ENCODE measurements at regions of chr4 and their contacts with region 1.

Region 1: DNA sequence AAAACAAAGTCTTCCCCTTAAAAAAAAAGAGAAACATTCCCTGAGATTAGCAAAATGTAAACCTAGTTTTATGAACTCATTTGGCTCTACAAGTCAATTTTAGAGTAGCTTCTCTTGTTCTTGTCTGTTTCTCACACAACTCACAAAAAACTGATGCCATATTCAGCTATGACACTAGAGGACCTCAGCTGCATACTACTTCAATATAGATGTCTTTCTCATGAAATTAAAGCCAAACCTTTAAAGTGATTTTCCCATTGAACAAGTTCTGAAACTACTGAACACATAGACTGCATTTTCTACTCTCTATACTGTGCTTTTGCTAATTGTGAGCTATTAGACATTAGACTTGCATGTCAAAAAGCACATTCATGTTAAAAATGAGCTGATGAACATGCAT is 49.8 kb downstream of the TBCK start:
- DNase-seq: no peak

Region 2: DNA sequence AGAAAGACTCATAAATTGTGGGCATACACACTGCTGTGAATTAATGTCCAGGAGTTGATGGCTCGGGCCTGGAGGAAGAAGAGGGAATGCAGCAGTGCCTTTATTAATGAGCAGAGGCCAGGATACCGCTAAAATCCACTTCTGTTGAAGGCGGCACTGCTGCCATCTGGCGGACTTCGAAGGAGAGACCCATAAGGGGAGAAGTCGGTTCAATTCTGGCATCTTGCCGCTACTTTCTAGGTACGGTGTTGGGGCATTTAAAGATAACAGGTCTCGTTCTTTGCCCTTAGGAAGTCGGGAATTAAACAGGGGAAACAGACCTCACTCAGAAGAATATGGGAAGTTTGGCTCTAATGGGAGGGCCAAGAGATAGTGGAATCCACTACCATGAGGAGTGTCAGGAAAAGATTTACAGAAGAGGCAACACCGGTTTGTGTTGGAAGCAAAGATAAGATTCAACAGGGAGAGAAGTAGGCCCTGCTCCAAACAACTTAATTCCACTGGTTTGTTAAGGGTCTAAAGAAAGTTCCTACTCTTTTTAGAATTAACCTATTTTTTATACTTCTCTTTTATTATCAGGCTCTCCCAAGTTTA is 236.0 kb after region 1 on chr4:
- intact Hi-C with region 1: loop called (anchors 2 kb)
- DNase-seq: peak in 8 of 10 donors; percentile 18 to 80 (median 54)

Measured in posterior cingulate gyrus (tissue), 11 donors.